ENCODE measurements at regions of chr20 and their contacts with region 1.

Region 1: GRCh38 chr20:38893565-38894090 is 32.6 kb upstream of the FAM83D start:
- DNase-seq: peak; percentile 32 to 72 (median 50)
- H3K4me3 ChIP-seq: no peak overlapping the region
- H3K27ac ChIP-seq: no peak overlapping the region
- H3K4me1 ChIP-seq: no peaks in the 10 kb centered on the region
- H3K27me3 ChIP-seq: no peaks in the 10 kb centered on the region
- CTCF ChIP-seq: peak in 1 of 3 donors; percentile 47
- EP300 ChIP-seq: no peak
- POLR2A ChIP-seq: no peak

Region 2: DNA sequence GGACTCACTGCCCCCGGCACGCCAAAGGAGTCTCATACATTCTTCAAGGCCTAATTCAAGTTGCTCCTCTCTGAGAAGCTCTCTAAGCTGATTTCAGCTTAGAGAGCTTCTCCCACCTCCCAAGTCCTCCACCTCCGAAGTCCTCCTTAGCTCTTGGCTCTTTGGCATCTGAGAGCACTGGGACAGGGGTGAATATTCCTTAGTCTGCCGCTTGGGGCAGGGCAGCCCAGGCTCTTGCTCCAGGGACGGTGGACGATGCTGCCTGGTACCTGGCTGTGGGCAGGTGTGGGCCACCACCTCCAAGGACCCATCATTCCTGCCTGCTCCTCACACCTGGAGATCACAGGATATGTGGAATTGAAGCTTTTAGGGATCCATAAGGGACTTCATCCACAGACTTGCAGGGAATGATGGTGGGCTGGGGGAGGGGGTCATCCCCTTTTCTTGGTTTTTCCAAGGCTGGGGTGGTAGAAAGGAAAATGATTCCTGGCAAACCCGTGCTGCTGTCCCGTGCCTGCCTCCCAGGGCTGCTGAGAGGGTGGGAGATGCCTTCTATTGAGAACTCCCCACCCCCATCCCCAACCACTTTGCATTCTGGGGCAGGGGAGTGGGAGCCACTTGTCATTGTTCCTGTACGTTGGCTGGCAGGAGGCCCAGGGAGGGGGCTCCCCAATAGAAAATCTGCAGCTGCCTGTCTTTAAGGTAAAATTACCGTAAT is 234.6 kb before region 1 on chr20:
- intact Hi-C with region 1: loop called in 1 of 4 experiments (anchors 10 kb)
- DNase-seq: no peak
- H3K4me3 ChIP-seq: no peak overlapping the region
- H3K27ac ChIP-seq: no peak overlapping the region
- H3K4me1 ChIP-seq: no peaks in the 10 kb centered on the region
- H3K27me3 ChIP-seq: no peaks in the 10 kb centered on the region
- CTCF ChIP-seq: no peak
- EP300 ChIP-seq: no peak
- POLR2A ChIP-seq: no peak